CD4-positive, alpha-beta memory T cell (primary cell): ENCODE measurements at regions of chr5 and their contacts with region 1.

Region 1: DNA sequence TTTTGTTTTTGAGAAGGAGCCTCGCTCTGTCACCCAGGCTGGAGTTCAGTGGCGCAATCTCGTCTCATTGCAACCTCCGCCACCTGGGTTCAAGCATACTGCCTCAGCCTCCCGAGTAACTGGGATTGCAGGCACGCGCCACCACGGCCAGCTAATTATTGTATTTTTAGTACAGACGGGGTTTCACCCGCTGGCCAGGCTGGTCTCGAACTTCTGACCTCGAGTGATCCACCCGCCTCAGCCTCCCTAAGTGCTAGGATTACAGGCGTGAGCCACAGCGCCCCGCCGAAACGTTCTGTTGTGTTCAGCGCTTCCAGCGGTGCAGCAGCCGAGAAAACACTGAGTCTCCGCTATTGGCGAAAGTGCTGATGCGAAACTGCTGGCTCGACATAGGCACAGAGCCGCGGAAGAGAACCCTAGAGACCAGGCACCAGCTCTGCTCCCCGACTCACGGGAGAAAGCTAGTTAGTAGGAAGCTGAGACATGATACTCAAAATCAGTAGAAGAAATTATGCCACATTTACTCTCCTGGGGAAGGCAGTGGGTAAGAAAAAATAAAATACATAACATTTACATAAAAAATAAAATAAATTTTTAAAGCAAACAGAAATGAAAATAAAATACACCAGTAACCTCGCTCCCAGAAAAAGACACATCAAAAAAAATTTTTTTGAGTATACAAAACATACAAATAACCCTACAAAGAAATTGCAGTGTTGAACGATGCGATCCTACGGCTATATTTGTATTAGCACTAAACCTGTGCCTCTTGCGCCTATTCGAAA is 31.6 kb downstream of the ANXA2R start:
- DNase-seq: peak; percentile 89 to 92 (median 90)
- H3K4me3 ChIP-seq: peak overlapping the region; percentile 66 to 84
- H3K4me3 Mint-ChIP-seq: peak overlapping the region; percentile 84 to 94 (median 91)
- H3K27ac ChIP-seq: peak overlapping the region; percentile 85
- H3K27ac Mint-ChIP-seq: peak overlapping the region; percentile 90 to 99 (median 97)
- H3K4me1 ChIP-seq: peaks cover 38% of the 10 kb centered on the region
- H3K4me1 Mint-ChIP-seq: peaks cover 19 to 48% (median 33%) of the 10 kb centered on the region in 4 donors
- H3K27me3 ChIP-seq: no peaks in the 10 kb centered on the region
- H3K27me3 Mint-ChIP-seq: no peaks in the 10 kb centered on the region

Region 2: DNA sequence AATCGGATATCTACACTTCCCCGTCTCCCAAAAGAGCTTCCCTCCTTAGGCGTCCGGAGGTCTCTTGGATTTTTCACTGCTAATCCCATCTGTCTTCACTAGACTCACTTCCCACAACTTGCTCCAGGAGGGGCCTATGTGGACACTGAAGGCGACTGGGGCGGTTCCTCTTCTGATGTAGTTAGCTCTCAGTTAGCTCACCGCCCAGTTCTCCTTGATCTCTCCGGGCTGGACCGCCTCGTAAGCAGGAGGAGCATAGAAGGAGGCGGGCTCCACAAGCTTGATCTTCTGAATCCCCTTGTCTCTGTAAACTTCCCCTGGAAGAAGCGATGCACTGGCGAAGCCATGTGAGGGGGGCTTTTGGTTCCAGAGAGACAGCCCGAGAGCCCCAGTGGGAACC is 84.9 kb before region 1 on chr5:
- CTCF ChIA-PET with region 1: no interaction called
- POLR2A ChIA-PET with region 1: no interaction called
- intact Hi-C with region 1: no loop called
- DNase-seq: no peak
- H3K4me3 ChIP-seq: no peak overlapping the region
- H3K4me3 Mint-ChIP-seq: no peak overlapping the region
- H3K27ac ChIP-seq: no peak overlapping the region
- H3K27ac Mint-ChIP-seq: no peak overlapping the region
- H3K4me1 ChIP-seq: no peaks in the 10 kb centered on the region
- H3K4me1 Mint-ChIP-seq: peaks cover 0 to 2% (median 0%) of the 10 kb centered on the region in 4 donors
- H3K27me3 ChIP-seq: no peaks in the 10 kb centered on the region
- H3K27me3 Mint-ChIP-seq: no peaks in the 10 kb centered on the region

Region 3: DNA sequence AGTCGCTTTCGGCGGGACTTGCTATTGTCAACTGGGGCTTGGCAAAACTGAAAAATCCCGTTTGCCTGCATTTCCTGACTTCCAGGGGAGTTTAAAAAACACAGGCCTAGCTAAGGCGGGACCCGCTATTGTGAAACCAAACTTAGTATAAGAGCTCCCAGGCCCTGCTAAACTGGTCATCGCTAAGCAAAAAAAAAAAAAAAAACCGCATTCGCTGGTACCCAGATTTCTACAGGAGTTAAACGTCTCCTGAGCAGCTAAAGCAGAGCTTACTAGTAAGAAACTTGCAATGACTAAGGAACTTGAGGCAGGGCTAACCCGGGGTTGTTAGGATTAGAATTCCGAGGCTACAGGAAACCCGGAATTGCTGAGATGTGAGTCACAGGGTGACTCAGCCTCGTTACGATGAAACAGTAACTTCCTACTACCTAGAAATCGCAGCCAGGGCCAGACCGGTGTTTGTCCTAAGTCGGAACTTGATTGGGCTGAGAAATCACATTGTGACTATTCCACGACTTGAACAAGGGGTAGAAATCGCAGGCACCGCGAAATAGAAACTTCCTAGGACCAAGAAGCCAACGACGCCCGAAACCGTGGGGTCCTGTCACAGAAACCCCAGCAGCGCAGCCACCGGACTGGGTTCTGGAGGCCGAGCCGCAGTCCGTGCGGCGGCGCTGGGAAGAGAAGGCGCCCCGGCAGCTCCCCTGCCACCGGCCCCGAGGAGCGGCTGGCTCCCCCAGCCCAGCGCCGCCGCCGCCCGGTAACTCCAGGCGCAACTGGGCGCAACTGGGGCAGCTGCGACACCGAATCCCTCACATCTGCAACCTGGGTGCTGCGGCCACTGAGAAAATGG is 57.9 kb before region 1 on chr5:
- CTCF ChIA-PET with region 1: interaction called, 41 read pairs
- POLR2A ChIA-PET with region 1: interaction called, 164 read pairs
- intact Hi-C with region 1: loop called (anchors 1 kb)
- DNase-seq: peak; percentile 61 to 90 (median 66)
- H3K4me3 ChIP-seq: peak overlapping the region; percentile 83 to 90
- H3K4me3 Mint-ChIP-seq: peak overlapping the region; percentile 93 to 99 (median 98)
- H3K27ac ChIP-seq: peak overlapping the region; percentile 96
- H3K27ac Mint-ChIP-seq: peak overlapping the region; percentile 99 to 100 (median 100)
- H3K4me1 ChIP-seq: peaks cover 22% of the 10 kb centered on the region
- H3K4me1 Mint-ChIP-seq: peaks cover 7 to 42% (median 30%) of the 10 kb centered on the region in 4 donors
- H3K27me3 ChIP-seq: no peaks in the 10 kb centered on the region
- H3K27me3 Mint-ChIP-seq: no peaks in the 10 kb centered on the region

Region 4: GRCh38 chr5:43034591-43034968 is 26.0 kb after region 1 on chr5:
- CTCF ChIA-PET with region 1: interaction called, 43 read pairs
- POLR2A ChIA-PET with region 1: interaction called, 1,197 read pairs
- intact Hi-C with region 1: no loop called
- DNase-seq: no peak
- H3K4me3 ChIP-seq: no peak overlapping the region
- H3K4me3 Mint-ChIP-seq: peak overlapping the region in 7 of 8 donors; percentile 2 to 77 (median 42)
- H3K27ac ChIP-seq: no peak overlapping the region
- H3K27ac Mint-ChIP-seq: peak overlapping the region; percentile 31 to 100 (median 72)
- H3K4me1 ChIP-seq: peaks cover 34% of the 10 kb centered on the region
- H3K4me1 Mint-ChIP-seq: peaks cover 26 to 61% (median 41%) of the 10 kb centered on the region in 4 donors
- H3K27me3 ChIP-seq: no peaks in the 10 kb centered on the region
- H3K27me3 Mint-ChIP-seq: no peaks in the 10 kb centered on the region

Region 5: GRCh38 chr5:43061352-43062075 is 53.0 kb after region 1 on chr5:
- CTCF ChIA-PET with region 1: interaction called, 17 read pairs
- POLR2A ChIA-PET with region 1: interaction called, 224 read pairs
- intact Hi-C with region 1: loop called (anchors 1 kb)
- DNase-seq: no peak
- H3K4me3 ChIP-seq: no peak overlapping the region
- H3K4me3 Mint-ChIP-seq: no peak overlapping the region
- H3K27ac ChIP-seq: no peak overlapping the region
- H3K27ac Mint-ChIP-seq: peak overlapping the region; percentile 20 to 93 (median 77)
- H3K4me1 ChIP-seq: peaks cover 8% of the 10 kb centered on the region
- H3K4me1 Mint-ChIP-seq: peaks cover 8 to 17% (median 13%) of the 10 kb centered on the region in 4 donors
- H3K27me3 ChIP-seq: no peaks in the 10 kb centered on the region
- H3K27me3 Mint-ChIP-seq: no peaks in the 10 kb centered on the region

Region 6: DNA sequence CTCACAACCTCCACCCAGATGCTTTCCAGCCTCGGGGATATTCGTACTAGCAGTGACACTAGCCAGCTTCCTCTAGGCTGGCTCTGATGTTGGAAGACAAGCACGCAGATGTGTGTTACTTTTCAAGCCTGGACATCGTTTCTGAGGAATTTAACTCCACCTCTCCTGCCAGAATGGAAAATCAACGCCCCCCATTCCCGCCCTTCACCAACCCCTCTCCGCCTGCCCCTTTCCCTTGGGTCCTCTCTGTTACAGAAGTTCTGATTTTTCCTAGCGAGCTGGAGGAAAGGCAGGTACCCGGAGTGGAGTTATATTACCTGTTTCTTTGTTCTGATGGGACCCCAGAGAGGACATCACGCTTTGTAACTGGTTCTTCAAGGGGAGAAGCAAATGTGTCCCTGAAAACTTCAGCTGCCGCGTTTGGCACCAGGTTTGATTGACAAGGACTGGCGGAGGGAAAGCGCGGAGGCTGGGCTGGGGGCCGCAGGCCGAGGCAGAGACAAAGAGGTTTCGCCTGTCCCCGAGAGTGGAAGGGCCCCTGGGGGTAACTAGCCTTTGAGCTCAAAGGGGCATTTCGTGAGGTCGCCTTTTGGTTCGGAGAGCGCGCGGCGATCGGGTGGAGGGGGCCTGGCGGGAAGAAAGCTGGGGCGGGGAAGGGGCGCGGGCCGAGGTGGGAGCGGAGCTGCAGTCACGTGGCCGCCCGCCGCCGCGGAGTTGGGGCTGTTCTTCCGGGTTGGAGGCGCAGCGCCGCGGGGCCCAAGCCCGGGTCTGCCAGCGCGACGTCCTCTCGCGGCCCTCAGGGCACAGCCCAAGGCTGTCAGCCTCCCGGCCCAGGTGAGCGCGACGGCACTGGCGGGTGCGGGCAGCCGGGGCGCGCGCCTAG is 594.1 kb after region 1 on chr5 and contains the start of gene NNT:
- CTCF ChIA-PET with region 1: no interaction called
- POLR2A ChIA-PET with region 1: interaction called, 11 read pairs
- intact Hi-C with region 1: no loop called
- DNase-seq: peak; percentile 75 to 84 (median 80)
- H3K4me3 ChIP-seq: peak within 1 kb of the TSS; percentile 91 to 99
- H3K4me3 Mint-ChIP-seq: peak within 1 kb of the TSS; percentile 90 to 98 (median 96)
- H3K27ac ChIP-seq: peak within 1 kb of the TSS; percentile 88
- H3K27ac Mint-ChIP-seq: peak within 1 kb of the TSS; percentile 91 to 98 (median 94)
- H3K4me1 ChIP-seq: peaks cover 38% of the 10 kb centered on the region
- H3K4me1 Mint-ChIP-seq: peaks cover 18 to 63% (median 49%) of the 10 kb centered on the region in 4 donors
- H3K27me3 ChIP-seq: no peaks in the 10 kb centered on the region
- H3K27me3 Mint-ChIP-seq: no peaks in the 10 kb centered on the region
- total RNA-seq, gene NNT: 56.1 to 57.6 TPM